ENCODE measurements at regions of chr4 and their contacts with region 1.

Region 1: DNA sequence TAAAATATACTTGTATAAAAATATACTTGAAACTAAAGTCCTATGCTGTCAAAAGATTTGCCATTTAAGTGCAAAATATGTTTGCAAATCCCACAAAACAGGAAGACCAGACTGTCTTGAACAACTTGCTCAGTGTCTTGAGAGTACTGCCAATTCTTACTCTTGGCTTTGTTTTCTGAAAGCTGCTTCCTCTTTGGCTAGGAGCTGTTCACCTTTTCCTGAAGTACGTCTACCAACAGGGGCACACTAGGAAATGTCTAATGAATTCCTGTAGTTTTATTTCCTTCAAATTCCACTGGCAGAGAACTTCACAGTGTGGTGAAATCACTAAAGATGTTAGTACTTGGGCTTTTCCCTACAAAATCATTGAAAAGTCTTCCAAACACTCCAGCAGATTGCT is 46.4 kb upstream of the ABCG2 start:
- DNase-seq: peak; percentile 90
- H3K4me3 ChIP-seq: peak overlapping the region in 1 of 3 experiments; percentile 28
- H3K27ac ChIP-seq: peak overlapping the region; percentile 48
- H3K4me1 ChIP-seq: peaks cover 15% of the 10 kb centered on the region
- H3K27me3 ChIP-seq: no peaks in the 10 kb centered on the region
- CTCF ChIP-seq: peak in 1 of 2 donors; percentile 5
- POLR2A ChIP-seq: no peak

Region 2: GRCh38 chr4:87657525-87657924 is 547.4 kb before region 1 on chr4:
- CTCF ChIA-PET with region 1: no interaction called
- POLR2A ChIA-PET with region 1: no interaction called
- dilution Hi-C with region 1: no loop called
- intact Hi-C with region 1: loop called (anchors 10 kb)
- DNase-seq: peak; percentile 91
- H3K4me3 ChIP-seq: no peak overlapping the region
- H3K27ac ChIP-seq: peak overlapping the region; percentile 93
- H3K4me1 ChIP-seq: peaks cover 32% of the 10 kb centered on the region
- H3K27me3 ChIP-seq: no peaks in the 10 kb centered on the region
- CTCF ChIP-seq: no peak
- POLR2A ChIP-seq: no peak

Region 3: DNA sequence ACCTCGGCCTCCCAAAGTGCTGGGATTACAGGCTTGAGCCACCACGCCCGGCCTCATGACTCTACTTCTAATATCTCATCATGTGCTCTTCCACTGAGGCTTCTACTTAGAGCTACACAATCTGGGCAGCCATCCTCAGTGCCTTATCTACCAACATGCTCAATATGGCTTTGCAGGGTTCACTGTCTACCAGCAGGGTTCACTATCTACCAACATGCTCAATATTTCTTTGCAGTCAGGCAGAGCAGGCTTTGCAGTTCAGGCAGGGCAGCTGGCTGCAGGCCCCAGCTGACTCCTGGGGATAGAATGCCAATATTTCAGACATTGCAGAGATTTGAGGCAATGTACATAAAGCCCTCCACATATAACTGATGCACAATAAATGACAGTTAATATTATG is 150.0 kb before region 1 on chr4:
- CTCF ChIA-PET with region 1: interaction called, 204 read pairs
- POLR2A ChIA-PET with region 1: interaction called, 7 read pairs
- dilution Hi-C with region 1: no loop called
- intact Hi-C with region 1: loop called (anchors 2 kb)
- DNase-seq: peak; percentile 77
- H3K4me3 ChIP-seq: no peak overlapping the region
- H3K27ac ChIP-seq: no peak overlapping the region
- H3K4me1 ChIP-seq: peaks cover 4% of the 10 kb centered on the region
- H3K27me3 ChIP-seq: no peaks in the 10 kb centered on the region
- CTCF ChIP-seq: peak; percentile 46 to 72
- POLR2A ChIP-seq: no peak

Region 4: DNA sequence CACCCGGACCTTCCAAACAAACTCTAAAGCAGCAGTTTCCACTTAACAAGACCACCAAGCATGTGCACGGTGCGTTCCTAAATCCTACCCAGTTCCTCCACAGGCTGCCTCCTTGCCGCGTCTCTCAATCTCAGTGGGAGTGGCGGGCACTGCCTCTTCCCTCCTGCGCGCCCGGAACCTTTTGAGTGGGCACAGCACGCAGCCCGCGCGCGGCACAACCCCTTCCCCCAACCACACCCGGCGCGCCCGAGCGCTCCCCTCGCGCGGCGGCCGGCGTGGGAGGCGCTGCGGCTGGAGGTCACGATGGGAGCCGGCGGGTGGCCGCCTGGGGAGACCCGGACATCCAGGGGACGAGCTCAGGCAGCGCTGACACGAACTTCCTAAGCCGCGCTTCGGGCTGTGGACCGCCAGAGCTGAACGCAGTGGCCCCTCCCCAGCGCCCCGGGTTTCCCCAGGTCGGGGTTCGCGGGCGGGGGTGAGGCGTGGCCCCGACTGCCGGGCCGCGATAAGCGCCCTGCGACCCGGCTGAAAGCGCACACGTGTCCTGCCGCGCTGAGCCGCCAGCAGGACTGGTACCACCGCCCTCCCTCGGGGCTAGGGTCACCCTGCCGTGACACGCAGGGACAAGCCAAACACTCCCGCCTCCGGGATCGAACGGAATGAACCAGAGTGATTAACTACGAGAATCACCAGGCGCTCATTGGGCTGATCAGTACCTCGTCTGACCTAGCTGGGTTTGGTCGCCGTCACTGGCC is 46.2 kb before region 1 on chr4 and contains the start of gene ABCG2:
- CTCF ChIA-PET with region 1: no interaction called
- POLR2A ChIA-PET with region 1: no interaction called
- dilution Hi-C with region 1: no loop called
- intact Hi-C with region 1: loop called (anchors 2 kb)
- DNase-seq: peak; percentile 72
- H3K4me3 ChIP-seq: peak within 1 kb of the TSS; percentile 48 to 74 (median 52)
- H3K27ac ChIP-seq: peak within 1 kb of the TSS; percentile 19
- H3K4me1 ChIP-seq: peaks cover 12% of the 10 kb centered on the region
- H3K27me3 ChIP-seq: no peaks in the 10 kb centered on the region
- CTCF ChIP-seq: no peak
- POLR2A ChIP-seq: peak; percentile 24
- total RNA-seq, gene ABCG2: 5.0 and 6.4 TPM in 2 replicates

Measured in endothelial cell of umbilical vein (primary cell).